Astrocyte of the cerebellum (primary cell): ENCODE measurements at regions of chr4 and their contacts with region 1.

Region 1: GRCh38 chr4:54333657-54334056 is 104.6 kb downstream of the PDGFRA start:
- DNase-seq: no peak
- H3K4me3 ChIP-seq: no peak overlapping the region
- CTCF ChIP-seq: no peak

Region 2: GRCh38 chr4:54254116-54254914 is 79.3 kb before region 1 on chr4:
- in situ Hi-C with region 1: no loop called
- DNase-seq: no peak
- H3K4me3 ChIP-seq: no peak overlapping the region
- CTCF ChIP-seq: no peak

Region 3: DNA sequence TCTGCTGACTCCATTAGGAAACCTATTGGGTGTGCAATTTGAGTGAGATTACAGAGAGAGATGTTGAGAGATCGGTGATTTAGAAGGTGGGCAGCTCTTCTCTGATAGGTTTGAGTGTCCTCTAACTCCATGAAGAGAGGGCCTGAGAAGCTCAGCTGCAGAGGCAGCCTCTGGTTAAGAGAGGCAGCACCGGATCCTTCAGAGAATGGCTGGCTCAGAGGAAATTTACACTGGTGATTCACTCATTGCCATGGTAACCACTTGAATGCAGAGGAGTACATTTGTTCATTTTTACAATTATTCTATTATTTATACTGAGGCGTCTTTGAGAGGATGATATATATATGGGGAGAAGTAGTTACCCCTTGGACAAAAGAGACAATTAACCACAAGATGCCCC is 67.1 kb after region 1 on chr4:
- in situ Hi-C with region 1: no loop called
- DNase-seq: peak; percentile 65
- H3K4me3 ChIP-seq: no peak overlapping the region
- CTCF ChIP-seq: no peak

Region 4: GRCh38 chr4:54971474-54971950 is 637.9 kb after region 1 on chr4:
- in situ Hi-C with region 1: loop called (anchors 25 kb)
- DNase-seq: peak; percentile 53
- H3K4me3 ChIP-seq: no peak overlapping the region
- CTCF ChIP-seq: peak; percentile 76